Naive thymus-derived CD4-positive, alpha-beta T cell (primary cell): ENCODE measurements at regions of chr5 and their contacts with region 1.

Region 1: DNA sequence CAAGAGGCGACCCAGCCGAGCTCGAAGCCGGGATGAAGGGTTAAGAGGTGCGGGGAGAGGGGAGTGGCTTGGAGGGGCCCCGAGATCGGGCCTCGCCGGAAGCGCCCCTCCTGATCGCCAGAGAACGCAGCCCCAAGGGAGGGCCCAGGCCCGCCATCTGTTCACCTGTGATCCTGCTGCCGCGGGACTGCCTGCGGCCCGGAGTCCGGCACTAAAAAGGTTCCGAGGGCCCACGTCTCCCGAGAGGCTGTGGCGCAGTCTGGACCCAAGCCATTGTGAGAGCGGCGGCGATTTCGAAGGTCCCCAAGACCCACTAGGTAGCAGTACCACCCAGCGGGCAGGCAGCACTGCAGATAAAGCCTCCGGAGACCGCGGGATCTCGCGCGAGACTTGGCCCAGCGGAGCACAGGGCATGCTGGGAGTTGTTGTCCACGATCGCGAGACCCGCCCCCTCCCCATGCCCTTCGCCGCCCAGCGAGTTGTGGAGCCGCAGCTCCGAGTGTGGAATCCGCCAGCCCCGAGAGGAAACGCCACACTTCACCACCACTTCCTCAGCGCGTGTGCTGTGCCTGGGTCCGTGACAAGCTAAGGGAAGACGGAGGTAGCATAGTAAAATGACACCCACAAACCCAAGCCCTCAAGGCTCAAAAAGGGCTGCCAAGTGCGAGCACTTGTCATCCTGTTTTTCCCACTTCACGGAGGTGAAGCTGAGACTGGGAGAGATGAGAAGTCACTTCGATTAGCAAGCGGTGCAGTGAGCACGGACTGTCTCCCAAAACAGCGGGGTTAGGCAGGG is at the start of gene KIAA1191:
- DNase-seq: peak; percentile 80 to 96 (median 93)
- ATAC-seq: peak; percentile 96
- H3K4me3 ChIP-seq: peak within 1 kb of the TSS; percentile 82
- H3K4me3 Mint-ChIP-seq: peak within 1 kb of the TSS; percentile 93 to 99 (median 98)
- H3K27ac ChIP-seq: peak within 1 kb of the TSS; percentile 80
- H3K27ac Mint-ChIP-seq: peak within 1 kb of the TSS; percentile 91 to 99 (median 94)
- H3K4me1 ChIP-seq: peaks cover 19 to 24% of the 10 kb centered on the region in 2 donors
- H3K4me1 Mint-ChIP-seq: peaks cover 21 to 49% (median 38%) of the 10 kb centered on the region in 7 donors
- H3K27me3 ChIP-seq: no peaks in the 10 kb centered on the region
- H3K27me3 Mint-ChIP-seq: no peaks in the 10 kb centered on the region
- total RNA-seq, gene KIAA1191: 59.4 to 76.6 (median 65.9) TPM

Region 2: DNA sequence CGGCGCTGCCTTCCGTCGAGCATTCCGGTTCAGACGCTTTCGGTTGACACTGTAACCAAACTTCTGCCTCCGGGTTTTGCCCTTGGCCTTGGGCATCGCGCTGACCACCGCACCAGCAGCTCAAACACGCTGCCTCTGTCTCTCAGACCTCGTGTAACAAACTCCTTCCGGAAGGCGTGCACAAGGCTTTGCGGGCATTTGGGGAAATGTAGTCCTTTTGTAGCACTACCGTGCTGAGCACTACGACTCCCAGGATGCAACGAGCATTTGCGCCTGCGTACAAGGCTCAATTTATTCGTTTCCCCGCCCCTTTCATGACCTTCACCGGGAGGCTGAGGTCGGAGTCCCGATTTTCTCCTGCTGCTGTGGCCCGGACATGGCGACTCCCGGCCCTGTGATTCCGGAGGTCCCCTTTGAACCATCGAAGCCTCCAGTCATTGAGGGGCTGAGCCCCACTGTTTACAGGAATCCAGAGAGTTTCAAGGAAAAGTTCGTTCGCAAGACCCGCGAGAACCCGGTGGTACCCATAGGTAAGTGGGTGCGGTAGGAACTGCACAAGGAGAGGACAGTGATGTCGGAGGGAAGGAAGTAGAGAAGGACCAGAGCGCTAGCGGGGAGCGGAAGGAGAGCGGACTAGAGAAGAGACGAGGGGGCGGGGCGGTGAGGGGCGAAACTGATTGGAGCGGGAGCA is 27.0 kb after region 1 on chr5 and contains the starts of genes HIGD2A and NOP16:
- CTCF ChIA-PET with region 1: interaction called, 5 read pairs
- POLR2A ChIA-PET with region 1: interaction called, 53 read pairs
- intact Hi-C with region 1: loop called (anchors 1 kb)
- DNase-seq: peak; percentile 89 to 99 (median 98)
- ATAC-seq: peak; percentile 95
- H3K4me3 ChIP-seq: peak within 1 kb of the TSS; percentile 95
- H3K4me3 Mint-ChIP-seq: peak within 1 kb of the TSS; percentile 94 to 100 (median 99)
- H3K27ac ChIP-seq: peak within 1 kb of the TSS; percentile 93
- H3K27ac Mint-ChIP-seq: peak within 1 kb of the TSS; percentile 91 to 100 (median 99)
- H3K4me1 ChIP-seq: peaks cover 18% of the 10 kb centered on the region in 2 donors
- H3K4me1 Mint-ChIP-seq: peaks cover 14 to 42% (median 35%) of the 10 kb centered on the region in 7 donors
- H3K27me3 ChIP-seq: no peaks in the 10 kb centered on the region
- H3K27me3 Mint-ChIP-seq: no peaks in the 10 kb centered on the region
- total RNA-seq, gene HIGD2A: 86.8 to 124 (median 112) TPM
- total RNA-seq, gene NOP16: 12.8 to 35.3 (median 22.2) TPM